Posterior cingulate gyrus (tissue), 11 donors: ENCODE measurements at regions of chr12 and their contacts with region 1.

Region 1: DNA sequence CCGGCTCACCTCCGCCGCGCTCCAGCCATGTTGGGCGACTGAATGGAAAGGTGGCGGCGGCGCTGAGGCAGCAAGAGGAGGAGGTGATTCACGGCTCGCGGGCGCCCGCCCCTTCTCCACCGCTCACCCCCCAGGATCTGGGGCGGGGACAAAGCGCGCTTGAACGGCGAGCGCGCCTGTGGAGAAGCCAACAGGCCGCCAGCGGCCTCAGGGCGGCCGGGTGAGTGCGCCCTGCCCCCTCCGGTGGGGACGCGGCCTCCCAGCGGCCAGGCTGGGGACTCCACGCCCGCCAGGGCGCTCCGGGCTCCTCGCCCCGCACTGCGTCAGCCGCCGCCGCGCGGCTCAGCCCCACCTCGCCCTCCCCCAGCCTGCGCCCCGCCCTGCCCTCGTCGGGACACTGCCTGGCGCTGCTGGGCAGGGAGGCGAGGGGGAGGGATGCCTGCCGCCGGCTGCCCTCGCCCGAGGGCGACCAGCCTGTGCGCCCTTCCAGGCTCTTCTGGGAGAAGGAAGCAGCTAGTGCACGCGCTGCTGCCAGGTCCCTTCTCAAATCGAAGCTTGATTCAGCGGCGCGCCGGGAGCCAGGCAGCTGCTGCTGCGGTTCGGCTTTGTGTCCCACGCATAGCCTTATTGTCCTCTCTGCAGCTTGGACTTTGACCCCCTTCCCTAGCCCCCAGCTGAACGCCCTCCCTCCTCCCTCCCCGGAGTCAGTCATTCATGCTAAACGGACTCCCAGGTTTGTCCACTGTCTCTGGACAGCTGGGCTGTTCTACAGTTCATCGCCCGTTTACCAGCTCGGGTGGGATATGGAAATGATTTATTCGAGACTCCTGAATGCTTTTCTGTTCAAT is at the start of gene KIF21A:
- DNase-seq: peak; percentile 74 to 98 (median 86)

Region 2: GRCh38 chr12:39319187-39319586 is 124.1 kb before region 1 on chr12:
- intact Hi-C with region 1: loop called (anchors 5 kb)
- DNase-seq: no peak

Region 3: GRCh38 chr12:39365364-39366001 is 77.8 kb before region 1 on chr12:
- intact Hi-C with region 1: loop called (anchors 2 kb)
- DNase-seq: peak in 2 of 10 donors; percentile 52 to 63

Region 4: GRCh38 chr12:39405580-39405979 is 37.7 kb before region 1 on chr12:
- intact Hi-C with region 1: loop called (anchors 5 kb)
- DNase-seq: no peak

Region 5: GRCh38 chr12:39619660-39620433 is 176.5 kb after region 1 on chr12 and contains the start of gene ABCD2:
- intact Hi-C with region 1: loop called (anchors 5 kb)
- DNase-seq: peak; percentile 48 to 96 (median 76)